K562 (cell line): ENCODE measurements at regions of chr9 and their contacts with region 1.

Region 1: DNA sequence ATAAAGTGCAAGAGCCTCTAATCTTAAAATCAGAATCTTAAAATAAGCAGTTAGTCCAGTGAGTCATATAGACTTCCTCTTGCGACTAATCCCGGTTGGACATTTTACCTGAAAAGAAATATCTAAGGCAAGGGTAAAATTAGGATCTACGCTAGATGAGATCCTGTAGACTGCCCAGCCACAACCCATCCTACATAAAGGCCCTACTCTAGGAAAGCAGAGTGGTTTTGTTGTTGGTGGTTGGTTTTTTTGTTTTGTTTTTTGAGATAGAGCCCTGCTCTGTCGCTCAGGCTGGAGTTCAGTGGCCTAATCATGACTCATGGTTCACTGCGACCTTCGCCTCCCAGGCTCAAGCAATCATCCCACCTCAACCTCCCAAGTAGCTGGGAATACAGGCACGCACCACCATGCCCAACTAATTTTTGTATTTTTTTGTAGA is 6.9 kb downstream of the TSC1 start:
- DNase-seq: no peak
- ATAC-seq: peak; percentile 66
- H3K4me3 ChIP-seq: no peak overlapping the region
- H3K27ac ChIP-seq: peak overlapping the region; percentile 43; the same call in 1 of the 3 replicates
- H3K4me1 ChIP-seq: peaks cover 0 to 7% of the 10 kb centered on the region in 2 experiments; a peak in 4 of 5 replicates
- H3K27me3 ChIP-seq: no peaks in the 10 kb centered on the region
- CTCF ChIP-seq: no peak
- EP300 ChIP-seq: no peak
- POLR2A ChIP-seq: no peak
- RAD21 ChIP-seq: no peak

Region 2: GRCh38 chr9:131598121-131598520 is 1339.4 kb before region 1 on chr9:
- CTCF ChIA-PET with region 1: no interaction called
- POLR2A ChIA-PET with region 1: no interaction called
- in situ Hi-C with region 1: no loop called
- intact Hi-C with region 1: no loop called
- DNase-seq: no peak
- ATAC-seq: no peak
- H3K4me3 ChIP-seq: no peak overlapping the region
- H3K27ac ChIP-seq: no peak overlapping the region
- H3K4me1 ChIP-seq: peaks cover 6 to 19% of the 10 kb centered on the region in 2 experiments; a peak in 4 of 5 replicates
- H3K27me3 ChIP-seq: no peaks in the 10 kb centered on the region
- CTCF ChIP-seq: no peak
- EP300 ChIP-seq: no peak
- POLR2A ChIP-seq: no peak
- RAD21 ChIP-seq: no peak

Region 3: GRCh38 chr9:132908635-132909034 is 28.8 kb before region 1 on chr9:
- CTCF ChIA-PET with region 1: no interaction called
- POLR2A ChIA-PET with region 1: interaction called, 4 read pairs
- in situ Hi-C with region 1: no loop called
- intact Hi-C with region 1: loop called (anchors 2 kb)
- DNase-seq: no peak
- ATAC-seq: no peak
- H3K4me3 ChIP-seq: no peak overlapping the region
- H3K27ac ChIP-seq: no peak overlapping the region
- H3K4me1 ChIP-seq: no peaks in the 10 kb centered on the region
- H3K27me3 ChIP-seq: no peaks in the 10 kb centered on the region
- CTCF ChIP-seq: no peak
- EP300 ChIP-seq: no peak
- POLR2A ChIP-seq: no peak
- RAD21 ChIP-seq: no peak

Region 4: DNA sequence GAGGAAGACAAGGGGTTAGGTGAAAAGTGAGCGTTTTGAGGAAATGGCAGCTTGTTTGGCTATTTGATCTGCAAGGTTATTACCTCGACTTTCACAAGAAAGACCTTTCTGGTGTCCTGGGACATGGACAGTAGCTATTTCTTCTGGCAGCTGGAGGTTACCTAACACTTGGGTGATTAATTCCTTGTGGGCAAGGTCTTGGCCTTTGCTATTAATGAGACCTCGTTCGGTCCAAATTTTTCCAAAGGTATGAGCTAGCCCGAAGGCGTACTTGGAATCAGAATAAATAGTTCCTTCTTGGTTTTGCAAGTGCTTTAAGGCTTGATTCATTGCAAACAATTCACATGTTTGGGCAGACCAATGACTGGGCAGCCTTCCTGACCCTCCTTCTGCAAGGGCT is 98.2 kb after region 1 on chr9:
- CTCF ChIA-PET with region 1: no interaction called
- POLR2A ChIA-PET with region 1: no interaction called
- in situ Hi-C with region 1: no loop called
- intact Hi-C with region 1: no loop called
- DNase-seq: no peak
- ATAC-seq: no peak
- H3K4me3 ChIP-seq: no peak overlapping the region
- H3K27ac ChIP-seq: no peak overlapping the region
- H3K4me1 ChIP-seq: peaks cover 7 to 12% of the 10 kb centered on the region in 2 experiments; a peak in 3 of 5 replicates
- H3K27me3 ChIP-seq: no peaks in the 10 kb centered on the region
- CTCF ChIP-seq: no peak
- EP300 ChIP-seq: no peak
- POLR2A ChIP-seq: no peak
- RAD21 ChIP-seq: no peak

Region 5: GRCh38 chr9:133067821-133068220 is 130.3 kb after region 1 on chr9:
- CTCF ChIA-PET with region 1: no interaction called
- POLR2A ChIA-PET with region 1: no interaction called
- in situ Hi-C with region 1: no loop called
- intact Hi-C with region 1: no loop called
- DNase-seq: no peak
- ATAC-seq: no peak
- H3K4me3 ChIP-seq: no peak overlapping the region
- H3K27ac ChIP-seq: no peak overlapping the region
- H3K4me1 ChIP-seq: peaks cover 0 to 22% of the 10 kb centered on the region in 2 experiments; a peak in 2 of 5 replicates
- H3K27me3 ChIP-seq: no peaks in the 10 kb centered on the region
- CTCF ChIP-seq: no peak
- EP300 ChIP-seq: no peak
- POLR2A ChIP-seq: no peak
- RAD21 ChIP-seq: no peak